T-cell (primary cell): ENCODE measurements at regions of chr15 and their contacts with region 1.

Region 1: GRCh38 chr15:99275525-99276128 is 24.3 kb downstream of the LRRC28 start:
- DNase-seq: no peak
- ATAC-seq: no peak
- H3K4me3 ChIP-seq: no peak overlapping the region
- H3K4me3 Mint-ChIP-seq: no peak overlapping the region
- H3K27ac ChIP-seq: no peak overlapping the region
- H3K27ac Mint-ChIP-seq: no peak overlapping the region
- H3K4me1 ChIP-seq: no peaks in the 10 kb centered on the region
- H3K4me1 Mint-ChIP-seq: peaks cover 19 to 26% (median 19%) of the 10 kb centered on the region in 3 donors
- H3K27me3 ChIP-seq: no peaks in the 10 kb centered on the region
- H3K27me3 Mint-ChIP-seq: no peaks in the 10 kb centered on the region

Region 2: DNA sequence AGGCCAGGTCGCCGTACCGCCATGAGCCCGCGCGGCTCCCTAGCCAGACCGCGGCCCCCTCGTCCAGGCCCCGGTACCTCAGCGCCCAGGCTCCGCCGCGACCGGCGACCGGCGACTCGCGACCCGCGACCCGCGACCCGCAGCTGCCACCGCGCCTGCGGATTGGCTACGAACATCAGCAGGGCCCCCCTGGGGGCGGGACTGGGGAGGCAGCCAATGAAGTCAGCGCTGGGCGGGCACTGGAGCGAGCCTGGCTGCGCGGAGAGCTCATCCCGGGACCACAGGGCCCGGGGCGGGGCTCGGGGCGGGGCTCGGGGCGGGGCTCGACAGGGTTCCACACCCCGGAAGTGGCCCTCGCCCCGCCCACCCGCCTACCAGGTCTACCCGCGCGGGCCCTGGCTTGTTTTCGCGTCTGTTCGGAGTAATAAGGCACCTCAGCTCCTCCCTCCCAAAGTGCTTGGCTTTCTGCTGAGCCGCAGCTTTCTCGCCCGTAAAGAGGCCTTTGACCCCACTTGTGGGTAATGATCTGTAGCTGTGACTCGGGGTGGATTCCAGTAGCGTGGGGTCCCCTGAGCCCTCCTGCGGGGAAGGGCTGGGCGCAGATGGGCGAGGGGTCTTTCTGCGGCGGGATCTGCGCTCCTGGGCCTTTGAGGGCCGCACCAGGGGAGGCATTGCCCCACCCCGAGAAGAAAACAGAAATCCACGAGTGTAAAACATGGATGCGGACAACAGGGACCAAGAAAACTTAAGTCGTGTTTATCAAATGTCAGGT is 457.8 kb after region 1 on chr15 and contains the start of gene LYSMD4:
- CTCF ChIA-PET with region 1: interaction called in 1 of 2 experiments, 12 read pairs
- POLR2A ChIA-PET with region 1: no interaction called
- DNase-seq: peak; percentile 95 to 99 (median 98)
- ATAC-seq: peak; percentile 98 to 100 (median 98)
- H3K4me3 ChIP-seq: peak within 1 kb of the TSS; percentile 71 to 86
- H3K4me3 Mint-ChIP-seq: peak within 1 kb of the TSS; percentile 82 to 85 (median 83)
- H3K27ac ChIP-seq: peak within 1 kb of the TSS; percentile 84
- H3K27ac Mint-ChIP-seq: peak within 1 kb of the TSS; percentile 91 to 96
- H3K4me1 ChIP-seq: peaks cover 2 to 21% of the 10 kb centered on the region in 2 experiments
- H3K4me1 Mint-ChIP-seq: peaks cover 20 to 27% (median 25%) of the 10 kb centered on the region in 3 donors
- H3K27me3 ChIP-seq: no peaks in the 10 kb centered on the region
- H3K27me3 Mint-ChIP-seq: no peaks in the 10 kb centered on the region
- total RNA-seq, gene LYSMD4: 12.6 to 26.5 (median 17.6) TPM